Activated naive CD4-positive, alpha-beta T cell treated with anti-CD3 and anti-CD28 coated beads for 36 hours (primary cell): ENCODE measurements at regions of chr3 and their contacts with region 1.

Region 1: DNA sequence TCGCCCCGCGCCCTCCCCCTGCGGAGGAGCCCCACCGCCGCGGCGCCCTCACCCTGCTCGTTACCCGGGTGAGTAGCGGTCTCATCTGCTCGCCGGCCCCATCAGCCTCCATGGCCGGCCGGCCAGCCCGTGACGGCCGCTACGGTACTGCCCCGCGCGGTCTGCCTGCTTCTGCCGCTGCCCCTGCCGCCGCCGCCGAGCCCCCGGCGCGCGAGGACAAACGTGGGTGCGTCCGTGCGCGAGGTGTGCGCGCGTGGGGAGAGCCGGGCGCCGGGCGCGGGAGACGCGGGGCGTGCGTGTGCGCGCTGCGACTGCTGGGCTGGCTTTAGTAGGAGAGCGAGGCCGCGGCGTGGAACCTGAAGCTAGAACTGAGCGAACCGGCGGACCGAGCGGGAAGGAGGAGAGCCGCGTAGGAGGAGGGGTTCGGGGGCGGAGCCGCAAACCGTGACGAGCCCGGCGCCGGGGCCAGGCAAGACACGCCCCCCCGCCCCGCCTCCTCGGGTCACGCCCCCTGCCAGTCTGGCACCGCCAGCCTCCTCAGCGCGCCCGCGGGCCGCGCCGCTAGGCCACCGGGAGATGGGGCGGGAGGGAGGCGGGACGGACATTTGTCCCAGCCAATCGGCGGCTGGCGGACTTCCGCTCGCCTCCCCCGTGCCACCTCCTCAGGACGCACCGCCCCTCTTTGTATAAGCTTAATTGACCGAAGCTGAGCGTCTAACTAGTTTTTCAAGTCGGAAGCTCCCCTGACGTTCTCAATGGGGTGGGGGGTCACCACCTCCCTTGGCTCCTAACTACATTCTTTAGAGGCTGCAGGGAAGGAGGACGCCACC is at the start of gene SLC4A7:
- DNase-seq: peak; percentile 98
- H3K4me3 Mint-ChIP-seq: peak within 1 kb of the TSS; percentile 98
- H3K27ac Mint-ChIP-seq: peak within 1 kb of the TSS; percentile 91
- H3K4me1 Mint-ChIP-seq: peaks cover 31% of the 10 kb centered on the region
- H3K27me3 Mint-ChIP-seq: no peaks in the 10 kb centered on the region
- total RNA-seq, gene SLC4A7: 37.0 to 39.0 TPM

Region 2: GRCh38 chr3:25782938-25783660 is 1701.1 kb before region 1 on chr3 and contains the start of gene NGLY1:
- CTCF ChIA-PET with region 1: no interaction called
- intact Hi-C with region 1: loop called (anchors 2 kb)
- DNase-seq: peak; percentile 87
- H3K4me3 Mint-ChIP-seq: peak within 1 kb of the TSS; percentile 88
- H3K27ac Mint-ChIP-seq: peak within 1 kb of the TSS; percentile 88
- H3K4me1 Mint-ChIP-seq: peaks cover 40% of the 10 kb centered on the region
- H3K27me3 Mint-ChIP-seq: no peaks in the 10 kb centered on the region
- total RNA-seq, gene NGLY1: 49.0 to 50.0 TPM

Region 3: GRCh38 chr3:27454914-27455313 is 29.3 kb before region 1 on chr3:
- CTCF ChIA-PET with region 1: no interaction called
- intact Hi-C with region 1: loop called (anchors 2 kb)
- DNase-seq: no peak
- H3K4me3 Mint-ChIP-seq: peak overlapping the region; percentile 15
- H3K27ac Mint-ChIP-seq: peak overlapping the region; percentile 56
- H3K4me1 Mint-ChIP-seq: peaks cover 52% of the 10 kb centered on the region
- H3K27me3 Mint-ChIP-seq: no peaks in the 10 kb centered on the region

Region 4: DNA sequence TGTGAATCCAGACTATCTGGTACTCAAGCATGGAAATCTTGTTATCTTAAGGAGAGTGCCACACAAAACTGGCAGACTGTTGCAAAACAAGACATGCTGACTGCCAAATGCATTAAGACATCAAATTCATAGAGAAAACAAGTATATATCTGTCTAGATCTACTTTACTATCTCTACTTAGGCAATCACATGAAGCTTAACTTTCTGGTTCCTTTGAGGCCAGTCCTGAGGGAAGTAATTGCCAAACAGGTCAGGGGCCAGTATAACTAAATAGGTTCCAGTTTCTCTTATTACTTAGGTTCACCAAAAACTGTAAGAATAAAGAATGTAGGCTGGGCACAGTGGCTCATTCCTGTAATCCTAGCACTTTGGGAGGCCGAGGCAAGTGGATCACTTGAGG is 15.8 kb after region 1 on chr3:
- CTCF ChIA-PET with region 1: no interaction called
- intact Hi-C with region 1: no loop called
- DNase-seq: no peak
- H3K4me3 Mint-ChIP-seq: no peak overlapping the region
- H3K27ac Mint-ChIP-seq: no peak overlapping the region
- H3K4me1 Mint-ChIP-seq: peaks cover 4% of the 10 kb centered on the region
- H3K27me3 Mint-ChIP-seq: no peaks in the 10 kb centered on the region

Region 5: DNA sequence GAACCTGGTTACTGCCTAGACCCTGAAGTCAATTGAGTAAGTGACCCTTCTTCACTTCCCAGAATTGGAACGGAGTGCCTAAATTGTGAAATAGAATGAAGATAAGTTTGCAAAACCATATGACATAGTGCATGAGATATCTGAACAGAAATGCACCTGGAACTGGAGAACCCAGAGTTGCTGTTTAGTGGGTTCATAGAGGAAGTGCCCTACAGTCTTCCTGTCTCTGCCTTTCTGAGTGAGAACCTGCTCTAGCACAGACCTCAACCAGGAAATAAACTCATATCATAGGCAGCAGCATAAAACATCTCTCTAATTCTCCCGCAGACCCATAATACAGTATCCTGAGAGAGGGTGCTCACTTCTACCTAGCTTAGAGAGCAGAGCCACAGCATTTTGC is 155.0 kb after region 1 on chr3:
- CTCF ChIA-PET with region 1: no interaction called
- intact Hi-C with region 1: loop called (anchors 1 kb)
- DNase-seq: peak; percentile 36
- H3K4me3 Mint-ChIP-seq: no peak overlapping the region
- H3K27ac Mint-ChIP-seq: peak overlapping the region; percentile 26
- H3K4me1 Mint-ChIP-seq: peaks cover 9% of the 10 kb centered on the region
- H3K27me3 Mint-ChIP-seq: no peaks in the 10 kb centered on the region

Region 6: GRCh38 chr3:27880969-27881892 is 397.0 kb after region 1 on chr3:
- CTCF ChIA-PET with region 1: no interaction called
- intact Hi-C with region 1: loop called (anchors 10 kb)
- DNase-seq: peak; percentile 41
- H3K4me3 Mint-ChIP-seq: peak overlapping the region; percentile 73
- H3K27ac Mint-ChIP-seq: peak overlapping the region; percentile 78
- H3K4me1 Mint-ChIP-seq: peaks cover 63% of the 10 kb centered on the region
- H3K27me3 Mint-ChIP-seq: no peaks in the 10 kb centered on the region